ENCODE measurements at regions of chr6 and their contacts with region 1.

Region 1: GRCh38 chr6:74631564-74631963 is 574.3 kb downstream of the COL12A1 start:
- DNase-seq: peak; percentile 25
- ATAC-seq: no peak
- H3K4me3 ChIP-seq: no peak overlapping the region
- H3K27ac ChIP-seq: no peak overlapping the region
- H3K4me1 ChIP-seq: no peaks in the 10 kb centered on the region
- H3K27me3 ChIP-seq: no peaks in the 10 kb centered on the region
- CTCF ChIP-seq: no peak
- POLR2A ChIP-seq: no peak
- RAD21 ChIP-seq: no peak

Region 2: GRCh38 chr6:74606581-74607071 is 24.9 kb before region 1 on chr6:
- CTCF ChIA-PET with region 1: no interaction called
- POLR2A ChIA-PET with region 1: no interaction called
- dilution Hi-C with region 1: no loop called
- in situ Hi-C with region 1: no loop called
- intact Hi-C with region 1: no loop called
- DNase-seq: peak; percentile 96
- ATAC-seq: peak; percentile 80
- H3K4me3 ChIP-seq: peak overlapping the region; percentile 35; the same call in 1 of the 2 replicates
- H3K27ac ChIP-seq: peak overlapping the region; percentile 43; the same call in 1 of the 2 replicates
- H3K4me1 ChIP-seq: peaks cover 22% of the 10 kb centered on the region
- H3K27me3 ChIP-seq: no peaks in the 10 kb centered on the region
- CTCF ChIP-seq: no peak
- POLR2A ChIP-seq: no peak
- RAD21 ChIP-seq: no peak

Region 3: DNA sequence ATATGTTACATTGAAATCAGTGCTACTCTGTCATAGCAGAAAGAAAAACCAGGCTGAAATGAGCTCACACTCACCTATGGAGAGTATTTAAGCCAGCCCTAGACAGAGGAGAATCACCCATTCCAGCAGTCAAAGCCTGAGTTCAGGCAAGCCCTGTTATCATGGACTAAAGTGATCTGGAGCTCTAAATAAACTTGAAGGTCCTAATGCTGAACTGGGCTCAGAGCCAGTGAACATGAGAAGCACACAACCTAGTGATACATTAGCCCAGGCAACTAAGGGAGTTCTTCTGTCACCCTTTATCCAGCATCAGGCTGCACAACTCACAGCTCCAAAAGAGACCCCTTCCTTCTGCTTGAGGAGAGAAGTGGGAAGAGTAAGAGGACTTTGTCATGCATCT is 149.3 kb after region 1 on chr6:
- CTCF ChIA-PET with region 1: no interaction called
- POLR2A ChIA-PET with region 1: no interaction called
- dilution Hi-C with region 1: no loop called
- in situ Hi-C with region 1: no loop called
- intact Hi-C with region 1: no loop called
- DNase-seq: peak; percentile 63
- ATAC-seq: peak; percentile 61
- H3K4me3 ChIP-seq: no peak overlapping the region
- H3K27ac ChIP-seq: no peak overlapping the region
- H3K4me1 ChIP-seq: no peaks in the 10 kb centered on the region
- H3K27me3 ChIP-seq: no peaks in the 10 kb centered on the region
- CTCF ChIP-seq: no peak
- POLR2A ChIP-seq: no peak
- RAD21 ChIP-seq: no peak

Region 4: DNA sequence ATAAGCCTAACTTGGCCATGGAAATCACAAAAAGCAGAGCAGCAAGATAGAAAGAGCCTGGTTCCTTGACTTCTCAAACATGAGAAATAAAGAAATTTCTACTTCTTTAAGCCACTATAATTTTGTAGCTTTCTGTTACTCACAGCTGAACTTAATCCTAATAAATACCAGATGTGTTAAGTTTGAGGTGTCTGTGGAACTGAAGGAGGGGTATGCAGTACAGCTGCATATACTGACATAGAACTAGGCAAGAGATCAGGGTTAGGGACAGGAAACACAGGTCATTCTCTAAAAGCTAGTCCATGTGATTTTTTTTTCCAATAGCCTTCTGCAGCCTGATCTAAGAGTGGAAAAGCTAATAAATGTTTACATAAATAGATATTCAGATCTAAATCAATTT is 450.4 kb after region 1 on chr6:
- CTCF ChIA-PET with region 1: no interaction called
- POLR2A ChIA-PET with region 1: interaction called, 12 read pairs
- dilution Hi-C with region 1: no loop called
- in situ Hi-C with region 1: no loop called
- intact Hi-C with region 1: no loop called
- DNase-seq: peak; percentile 50
- ATAC-seq: peak; percentile 22
- H3K4me3 ChIP-seq: no peak overlapping the region
- H3K27ac ChIP-seq: no peak overlapping the region
- H3K4me1 ChIP-seq: peaks cover 4% of the 10 kb centered on the region; the same call in 1 of the 2 replicates
- H3K27me3 ChIP-seq: no peaks in the 10 kb centered on the region
- CTCF ChIP-seq: no peak
- POLR2A ChIP-seq: no peak
- RAD21 ChIP-seq: no peak